Right ventricle myocardium inferior (tissue), 1 donor: ENCODE measurements at regions of chr9 and their contacts with region 1.

Region 1: DNA sequence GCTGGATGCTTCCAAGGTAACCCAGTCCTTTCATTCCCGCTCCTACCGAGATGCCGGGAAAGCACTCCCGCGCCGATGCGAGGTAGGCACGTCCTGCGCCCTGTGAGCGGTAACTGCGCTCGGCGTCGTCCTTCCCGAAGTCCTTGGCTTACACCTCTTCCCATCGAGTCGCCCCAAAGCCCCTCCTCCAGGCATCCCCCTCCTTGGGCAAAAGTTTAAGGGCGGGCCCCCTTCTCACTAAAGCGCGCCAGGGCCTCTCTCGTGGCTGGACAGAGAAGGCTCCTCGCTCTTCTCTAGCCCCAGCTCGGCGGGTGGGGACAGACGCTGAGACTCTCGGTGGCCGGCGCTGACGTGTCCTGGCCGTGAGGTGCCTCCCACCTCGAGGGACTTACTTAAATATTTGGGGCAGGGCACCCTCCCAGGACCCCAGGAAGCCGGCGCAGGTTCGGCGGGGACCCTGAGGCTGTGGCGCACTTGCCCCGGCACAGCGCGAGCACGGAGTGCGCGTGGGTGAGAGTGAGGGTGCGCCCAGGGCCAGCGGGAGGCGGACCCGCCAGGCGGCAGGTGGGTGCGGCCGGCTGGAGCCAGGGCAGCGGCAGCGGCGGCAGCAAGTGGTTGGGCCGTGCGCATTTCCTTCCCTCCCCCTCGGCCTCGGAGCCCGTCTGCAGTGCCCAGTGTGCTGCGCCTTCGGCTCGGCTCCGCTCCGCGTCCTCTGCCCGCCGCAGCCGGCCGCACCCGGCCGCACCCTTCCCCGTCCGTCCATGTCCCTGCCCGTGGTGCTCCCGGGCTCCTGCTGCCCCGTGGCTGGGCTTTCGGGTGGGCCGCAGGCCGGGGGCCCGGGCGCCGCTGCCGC is at the start of gene ENTREP1:
- DNase-seq: peak; percentile 83
- ATAC-seq: peak; percentile 94
- total RNA-seq, gene ENTREP1: 20.0 TPM

Region 2: DNA sequence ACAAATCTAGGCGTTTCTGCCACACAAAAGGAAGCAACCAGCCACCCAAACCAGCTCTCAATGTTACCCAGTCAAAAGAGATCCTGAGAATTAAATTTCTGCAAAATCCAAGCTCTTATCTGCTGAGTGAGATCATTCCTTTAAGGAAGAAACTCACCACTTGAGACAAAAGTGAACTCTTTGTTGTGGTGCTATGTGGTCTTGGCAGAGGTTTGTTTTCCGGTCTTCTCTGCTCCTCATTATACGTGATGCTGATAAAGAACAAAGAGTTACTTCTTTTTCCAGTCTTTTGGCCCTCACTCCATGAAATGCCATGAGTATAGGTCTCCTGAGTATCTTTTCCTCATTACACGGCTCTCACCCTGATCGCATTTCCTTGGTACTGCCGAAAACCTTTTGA is 393.0 kb before region 1 on chr9:
- intact Hi-C with region 1: no loop called
- DNase-seq: no peak
- ATAC-seq: no peak

Region 3: GRCh38 chr9:69035438-69036308 is 289.1 kb before region 1 on chr9 and contains the start of gene FXN:
- intact Hi-C with region 1: loop called (anchors 10 kb)
- DNase-seq: peak; percentile 94
- ATAC-seq: peak; percentile 96
- total RNA-seq, gene FXN: 36.6 TPM

Region 4: DNA sequence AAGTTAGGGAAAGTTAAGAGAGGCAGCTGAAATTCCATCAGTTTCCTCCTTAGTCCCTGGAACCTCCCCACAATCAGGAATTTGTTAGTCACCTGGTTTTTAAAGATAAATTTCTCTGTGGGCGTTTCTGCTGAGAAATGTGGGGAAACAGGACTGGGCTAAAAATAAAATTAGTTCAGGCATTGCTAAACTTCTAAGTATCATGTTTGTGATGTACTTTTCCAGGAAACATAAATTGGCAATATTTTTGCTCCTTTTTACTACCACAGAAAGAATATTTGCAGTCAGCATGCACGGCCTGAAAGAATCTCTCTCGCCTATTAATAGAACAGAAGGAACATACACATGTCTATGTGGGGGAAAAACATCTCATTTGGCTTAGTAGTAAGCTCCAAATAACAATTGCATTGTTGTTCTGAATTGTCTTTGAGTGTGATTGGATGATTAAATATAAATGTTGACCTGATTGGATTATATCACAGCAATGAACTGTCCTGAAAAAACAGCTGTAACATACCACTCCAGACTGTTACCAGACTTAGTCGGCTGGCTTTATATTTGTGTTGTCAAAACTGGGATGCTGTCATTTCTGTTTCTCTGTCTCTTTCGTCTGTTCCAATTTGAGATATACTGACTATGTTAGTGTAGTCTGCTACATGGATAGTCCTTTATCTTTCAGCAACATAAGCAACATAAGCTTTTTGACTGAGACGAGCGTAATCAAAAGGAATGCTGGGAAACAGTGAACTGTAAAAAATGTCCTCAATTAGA is 137.7 kb before region 1 on chr9:
- intact Hi-C with region 1: no loop called
- DNase-seq: no peak
- ATAC-seq: peak; percentile 61

Region 5: DNA sequence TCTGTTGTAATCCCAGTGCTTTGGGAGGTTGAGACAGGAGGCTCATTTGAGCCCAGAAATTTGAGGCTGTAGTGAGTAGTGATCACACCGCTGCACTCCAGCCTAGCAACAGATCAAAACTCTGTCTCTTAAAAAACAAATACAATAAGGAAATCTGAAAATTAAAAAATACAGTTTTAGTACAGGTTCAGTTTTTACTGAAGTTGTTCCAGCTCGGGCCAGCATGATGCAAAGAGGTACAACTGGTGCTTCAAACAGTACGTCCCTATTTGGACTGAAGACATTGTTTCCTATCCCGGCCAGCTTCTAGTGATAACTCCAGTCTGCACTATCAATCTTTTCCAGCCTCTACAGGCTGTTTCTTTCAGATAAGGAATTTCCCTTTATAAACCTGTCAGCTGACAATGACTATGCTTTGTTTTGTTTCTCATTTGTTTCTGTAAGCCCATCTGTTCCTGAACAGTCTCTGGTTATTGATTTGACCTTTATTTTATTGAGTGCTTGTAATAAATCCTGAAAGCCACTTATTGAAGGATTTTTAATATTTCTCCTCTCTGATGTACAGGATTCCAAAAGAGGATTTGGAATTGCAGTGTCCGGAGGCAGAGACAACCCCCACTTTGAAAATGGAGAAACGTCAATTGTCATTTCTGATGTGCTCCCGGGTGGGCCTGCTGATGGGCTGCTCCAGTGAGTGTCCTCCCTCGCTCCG is 108.8 kb before region 1 on chr9:
- intact Hi-C with region 1: loop called (anchors 5 kb)
- DNase-seq: no peak
- ATAC-seq: peak; percentile 79

Region 6: GRCh38 chr9:69273161-69273560 is 51.6 kb before region 1 on chr9:
- intact Hi-C with region 1: loop called (anchors 5 kb)
- DNase-seq: no peak
- ATAC-seq: peak; percentile 96

Region 7: GRCh38 chr9:69295872-69296552 is 28.8 kb before region 1 on chr9:
- intact Hi-C with region 1: loop called (anchors 2 kb)
- DNase-seq: no peak
- ATAC-seq: peak; percentile 72

Region 8: DNA sequence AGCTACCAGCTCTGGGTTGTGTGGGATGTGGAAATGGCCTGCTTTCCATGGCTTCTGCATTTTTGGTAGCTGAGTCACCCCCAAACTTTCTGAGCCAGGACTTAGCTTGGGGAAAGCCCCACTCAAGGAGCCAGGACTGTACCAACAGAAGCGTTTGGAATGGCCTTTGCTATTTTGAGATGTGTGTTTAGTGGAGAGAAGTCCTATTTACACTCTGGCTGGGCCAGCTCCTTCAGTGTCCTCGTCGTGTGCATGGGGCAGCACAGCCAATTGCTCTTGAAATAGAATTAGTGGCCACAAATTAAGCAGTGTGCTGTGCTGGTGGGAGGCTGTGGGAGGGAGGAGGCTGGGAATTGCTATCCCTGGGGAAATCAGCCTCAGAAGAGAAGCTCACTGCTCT is 51.9 kb after region 1 on chr9:
- intact Hi-C with region 1: loop called (anchors 5 kb)
- DNase-seq: no peak
- ATAC-seq: peak; percentile 89

Region 9: DNA sequence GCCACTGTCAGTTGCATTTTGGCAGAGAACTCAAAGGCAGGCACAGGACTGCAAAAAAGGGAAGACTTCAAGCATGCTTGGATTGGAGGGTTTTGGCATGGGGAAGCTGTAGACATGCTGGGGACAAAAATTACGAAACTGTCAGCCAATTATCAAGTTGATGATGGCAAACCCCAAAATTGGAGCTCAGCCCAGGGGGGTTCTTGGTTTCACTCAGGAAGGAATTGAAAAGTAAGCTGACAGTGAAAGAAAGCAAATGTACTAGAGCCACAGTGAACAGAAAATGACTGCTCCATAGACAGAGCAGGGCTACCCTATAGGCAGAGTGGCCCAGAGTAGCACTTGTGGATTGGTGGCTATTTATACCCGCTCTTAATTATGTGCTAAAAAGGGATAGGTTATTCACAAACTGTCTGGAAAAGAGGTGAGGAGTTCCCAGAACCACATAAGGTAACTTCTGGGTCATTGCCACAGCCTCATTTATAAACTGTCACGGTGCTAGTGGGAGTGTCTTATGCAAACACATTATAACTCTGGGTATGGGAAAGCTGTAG is 481.3 kb after region 1 on chr9:
- intact Hi-C with region 1: no loop called
- DNase-seq: no peak
- ATAC-seq: peak; percentile 79